CD8-positive, alpha-beta T cell (primary cell): ENCODE measurements at regions of chr1 and their contacts with region 1.

Region 1: GRCh38 chr1:2163205-2163604 is 31.4 kb downstream of the FAAP20 start:
- DNase-seq: peak in 3 of 9 experiments; percentile 41 to 51 (median 50)
- ATAC-seq: peak; percentile 59
- H3K4me3 ChIP-seq: no peak overlapping the region
- H3K4me3 Mint-ChIP-seq: no peak overlapping the region
- H3K27ac ChIP-seq: no peak overlapping the region
- H3K27ac Mint-ChIP-seq: peak overlapping the region; percentile 90
- H3K4me1 ChIP-seq: peaks cover 13% of the 10 kb centered on the region
- H3K4me1 Mint-ChIP-seq: peaks cover 17% of the 10 kb centered on the region
- H3K27me3 ChIP-seq: no peaks in the 10 kb centered on the region
- H3K27me3 Mint-ChIP-seq: no peaks in the 10 kb centered on the region
- CTCF ChIP-seq: no peak

Region 2: DNA sequence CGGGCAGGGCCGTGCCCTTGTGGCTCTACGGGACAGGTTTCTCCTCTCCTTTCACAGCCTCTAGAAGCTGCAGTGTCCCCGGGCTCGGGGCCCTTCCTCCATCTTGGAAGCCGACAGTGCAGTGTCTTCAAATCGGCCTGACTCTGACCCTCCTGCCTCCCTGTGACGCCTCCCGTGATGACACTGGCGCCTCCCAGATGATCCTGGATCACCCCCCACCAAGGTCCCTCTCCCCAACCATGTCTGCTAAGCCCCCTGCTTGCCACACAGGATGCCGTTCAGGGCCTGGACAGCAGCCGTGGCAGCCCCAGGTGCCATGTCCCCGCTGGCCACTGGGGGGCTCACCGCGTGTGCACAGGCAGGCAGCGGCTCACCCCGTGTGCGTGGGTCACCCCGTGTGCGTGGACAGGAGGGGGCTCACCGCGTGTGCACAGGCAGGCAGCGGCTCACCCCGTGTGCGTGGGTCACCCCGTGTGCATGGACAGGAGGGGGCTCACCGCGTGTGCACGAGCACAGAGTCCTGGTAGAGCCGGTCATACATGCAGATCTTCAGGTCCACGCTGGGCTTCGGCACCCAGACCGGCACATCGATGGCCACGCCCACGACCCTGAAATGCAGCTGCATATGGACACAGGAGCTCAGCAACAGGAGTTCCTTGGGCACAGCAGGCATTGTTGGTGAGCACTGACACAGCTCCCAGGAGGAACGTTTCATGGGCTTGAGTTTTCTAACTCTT is 219.2 kb before region 1 on chr1:
- CTCF ChIA-PET with region 1: interaction called, 8 read pairs
- POLR2A ChIA-PET with region 1: no interaction called
- intact Hi-C with region 1: loop called in 1 of 2 experiments (anchors 10 kb)
- DNase-seq: peak; percentile 38 to 75 (median 58)
- ATAC-seq: peak; percentile 99
- H3K4me3 ChIP-seq: no peak overlapping the region
- H3K4me3 Mint-ChIP-seq: no peak overlapping the region
- H3K27ac ChIP-seq: no peak overlapping the region
- H3K27ac Mint-ChIP-seq: no peak overlapping the region
- H3K4me1 ChIP-seq: peaks cover 5% of the 10 kb centered on the region
- H3K4me1 Mint-ChIP-seq: peaks cover 3% of the 10 kb centered on the region
- H3K27me3 ChIP-seq: no peaks in the 10 kb centered on the region
- H3K27me3 Mint-ChIP-seq: no peaks in the 10 kb centered on the region
- CTCF ChIP-seq: peak; percentile 83

Region 3: GRCh38 chr1:2091611-2092604 is 71.3 kb before region 1 on chr1:
- CTCF ChIA-PET with region 1: interaction called, 15 read pairs
- POLR2A ChIA-PET with region 1: no interaction called
- intact Hi-C with region 1: loop called in 1 of 2 experiments (anchors 5 kb)
- DNase-seq: peak in 8 of 9 experiments; percentile 9 to 66 (median 48)
- ATAC-seq: peak; percentile 40
- H3K4me3 ChIP-seq: no peak overlapping the region
- H3K4me3 Mint-ChIP-seq: no peak overlapping the region
- H3K27ac ChIP-seq: no peak overlapping the region
- H3K27ac Mint-ChIP-seq: no peak overlapping the region
- H3K4me1 ChIP-seq: no peaks in the 10 kb centered on the region
- H3K4me1 Mint-ChIP-seq: peaks cover 4% of the 10 kb centered on the region
- H3K27me3 ChIP-seq: no peaks in the 10 kb centered on the region
- H3K27me3 Mint-ChIP-seq: no peaks in the 10 kb centered on the region
- CTCF ChIP-seq: peak; percentile 66

Region 4: DNA sequence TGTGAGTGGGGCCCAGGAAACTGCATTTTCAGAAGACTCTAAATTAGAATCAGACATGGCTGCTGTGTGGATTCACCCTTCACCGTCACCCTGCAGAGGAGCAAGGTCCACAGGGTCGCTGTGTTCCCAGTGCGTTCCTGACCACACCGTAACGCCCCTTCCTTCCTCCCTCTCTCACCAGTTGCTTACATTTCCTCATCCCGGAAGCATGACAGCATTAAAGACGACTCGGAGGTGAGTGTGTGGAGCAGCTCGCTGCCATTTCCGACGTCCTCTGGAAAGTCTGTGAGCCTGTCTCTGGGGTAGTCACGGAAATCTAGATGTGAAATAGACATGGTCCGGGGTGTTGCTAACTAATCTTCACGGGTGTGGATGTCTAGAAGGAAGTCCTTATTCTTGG is 14.5 kb before region 1 on chr1:
- CTCF ChIA-PET with region 1: interaction called, 15 read pairs
- POLR2A ChIA-PET with region 1: interaction called, 3 read pairs
- intact Hi-C with region 1: no loop called
- DNase-seq: peak; percentile 28 to 89 (median 68)
- ATAC-seq: peak; percentile 61
- H3K4me3 ChIP-seq: peak overlapping the region; percentile 2 to 18
- H3K4me3 Mint-ChIP-seq: no peak overlapping the region
- H3K27ac ChIP-seq: peak overlapping the region; percentile 56 to 64
- H3K27ac Mint-ChIP-seq: no peak overlapping the region
- H3K4me1 ChIP-seq: peaks cover 80% of the 10 kb centered on the region
- H3K4me1 Mint-ChIP-seq: peaks cover 37% of the 10 kb centered on the region
- H3K27me3 ChIP-seq: no peaks in the 10 kb centered on the region
- H3K27me3 Mint-ChIP-seq: no peaks in the 10 kb centered on the region
- CTCF ChIP-seq: no peak